Sciatic nerve (tissue), 2 donors: ENCODE measurements at regions of chr6 and their contacts with region 1.

Region 1: DNA sequence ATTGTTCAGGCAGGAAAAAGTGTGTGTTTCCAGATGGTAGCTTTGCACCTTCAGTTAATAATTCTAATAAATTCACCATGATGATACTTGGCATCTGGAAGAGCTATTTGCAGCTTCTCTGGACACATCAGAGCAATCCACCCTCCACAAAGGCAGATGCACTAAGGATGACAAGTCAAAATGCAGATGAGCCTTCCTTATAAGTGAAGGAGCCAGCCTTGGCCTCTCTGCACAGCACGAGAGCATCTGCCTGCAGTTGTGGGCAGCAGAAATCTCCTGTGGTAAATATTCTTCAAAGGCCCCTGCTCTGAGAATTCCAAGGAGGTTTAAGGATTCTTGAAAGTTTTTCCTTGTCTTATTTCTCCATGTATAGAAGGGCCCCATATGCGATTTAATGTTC is 6.9 kb upstream of the POM121L2 start:
- DNase-seq: no peak
- ATAC-seq: no peak

Region 2: GRCh38 chr6:27267857-27268434 is 51.0 kb before region 1 on chr6:
- intact Hi-C with region 1: no loop called
- DNase-seq: no peak
- ATAC-seq: no peak

Region 3: DNA sequence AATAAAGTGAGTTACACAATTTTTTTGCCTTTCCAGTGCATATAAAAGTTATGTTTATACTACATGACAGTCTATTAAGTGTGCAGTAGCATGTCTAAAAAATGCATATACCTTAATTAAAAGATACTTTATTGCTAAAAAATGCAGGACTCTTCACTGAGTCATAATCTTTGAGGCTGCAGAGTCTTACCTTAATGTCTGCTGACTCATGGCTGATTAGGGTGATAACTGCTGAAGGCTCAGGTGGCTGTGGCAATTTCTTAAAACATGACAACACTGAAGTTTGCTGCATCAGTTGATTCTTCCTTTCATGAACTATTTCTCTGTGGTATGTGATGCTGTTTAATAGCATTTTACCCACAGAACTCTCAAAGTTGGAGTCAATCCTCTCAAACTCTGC is 1105.2 kb after region 1 on chr6:
- intact Hi-C with region 1: loop called (anchors 5 kb)
- DNase-seq: no peak
- ATAC-seq: no peak